HEK293T (cell line): ENCODE measurements at regions of chr7 and their contacts with region 1.

Region 1: GRCh38 chr7:104267701-104268368 is 60.0 kb upstream of the ORC5 start:
- DNase-seq: peak; percentile 14

Region 2: DNA sequence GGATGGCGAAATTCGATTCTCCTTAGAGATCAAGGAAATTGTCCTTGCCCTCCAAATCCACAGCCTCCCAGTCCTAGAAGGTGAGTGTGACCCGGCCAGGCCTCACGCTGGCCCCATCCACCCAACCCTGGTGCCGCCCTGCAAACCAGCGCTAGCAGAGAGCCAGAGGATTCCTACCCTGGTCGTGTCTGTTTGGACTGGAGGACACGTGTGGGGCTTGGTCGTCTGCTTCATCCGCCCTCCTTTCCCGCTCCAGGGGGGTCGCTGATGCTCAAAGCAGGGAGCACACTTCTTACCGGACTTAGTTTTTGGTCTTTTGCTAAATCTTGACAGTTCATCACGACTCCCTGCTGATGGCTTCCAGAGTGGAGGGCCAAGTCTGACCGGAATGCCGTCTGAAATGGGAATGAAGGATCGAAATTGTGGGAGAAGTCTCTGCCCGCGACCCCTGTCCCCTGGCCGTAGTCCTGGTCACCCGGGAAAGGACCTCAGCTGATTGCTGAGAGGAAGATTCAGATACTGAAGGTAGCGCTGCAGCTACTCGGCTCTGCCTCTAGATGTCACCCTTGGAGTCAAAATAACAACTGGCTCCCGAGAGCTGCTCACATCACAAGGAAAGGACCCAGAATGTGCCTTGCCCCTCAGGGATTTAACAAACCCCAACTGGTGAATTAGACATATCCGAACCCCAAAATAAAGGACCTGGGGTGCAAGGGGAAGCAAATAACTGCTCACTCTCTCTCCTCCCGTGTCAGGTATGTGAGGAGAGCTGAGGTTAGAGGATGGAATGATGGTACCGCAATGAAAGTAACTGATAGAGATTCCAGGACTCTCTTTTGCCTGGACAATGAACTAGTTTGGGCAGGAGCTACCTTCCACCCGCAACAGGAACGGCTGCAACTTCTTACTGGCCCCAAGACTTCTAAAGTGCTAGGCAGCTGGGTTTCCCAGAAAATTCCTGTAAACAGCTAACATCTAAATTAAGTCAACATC is 36.5 kb before region 1 on chr7:
- CTCF ChIA-PET with region 1: interaction called, 12 read pairs
- POLR2A ChIA-PET with region 1: no interaction called
- DNase-seq: peak; percentile 71

Region 3: GRCh38 chr7:104288137-104288536 is 20.3 kb after region 1 on chr7:
- CTCF ChIA-PET with region 1: no interaction called
- POLR2A ChIA-PET with region 1: no interaction called
- DNase-seq: no peak